ENCODE measurements at regions of chr12 and their contacts with region 1.

Region 1: GRCh38 chr12:39103552-39104165 is 198.3 kb upstream of the CPNE8 start:
- DNase-seq: no peak
- ATAC-seq: peak; percentile 94 to 95
- H3K4me3 ChIP-seq: no peak overlapping the region
- H3K27ac ChIP-seq: no peak overlapping the region
- H3K4me1 ChIP-seq: no peaks in the 10 kb centered on the region
- H3K27me3 ChIP-seq: no peaks in the 10 kb centered on the region
- CTCF ChIP-seq: peak; percentile 79

Region 2: DNA sequence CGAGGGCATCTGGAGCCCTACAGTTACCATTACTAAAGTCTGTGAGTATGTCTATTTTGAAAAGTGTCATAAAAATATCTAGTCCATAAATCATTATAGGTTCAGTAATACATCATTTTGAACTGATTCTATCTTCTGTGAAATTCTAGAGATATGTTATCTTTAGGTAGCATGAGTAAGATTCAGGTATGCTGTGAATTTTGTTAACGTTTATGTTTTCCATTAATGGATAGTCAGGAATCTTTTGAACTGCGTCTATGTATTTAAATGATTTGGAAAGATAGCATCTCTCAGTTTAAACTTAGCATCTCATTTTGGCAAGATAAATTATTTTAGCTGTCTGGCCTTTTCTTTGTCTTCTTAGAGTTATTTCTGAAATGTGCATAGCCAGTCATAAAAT is 778.8 kb before region 1 on chr12:
- intact Hi-C with region 1: loop called (anchors 10 kb)
- DNase-seq: no peak
- ATAC-seq: no peak
- H3K4me3 ChIP-seq: no peak overlapping the region
- H3K27ac ChIP-seq: no peak overlapping the region
- H3K4me1 ChIP-seq: no peaks in the 10 kb centered on the region
- H3K27me3 ChIP-seq: no peaks in the 10 kb centered on the region
- CTCF ChIP-seq: no peak

Region 3: GRCh38 chr12:38921025-38921677 is 182.5 kb before region 1 on chr12:
- intact Hi-C with region 1: loop called (anchors 10 kb)
- DNase-seq: no peak
- ATAC-seq: peak; percentile 74 to 75
- H3K4me3 ChIP-seq: no peak overlapping the region
- H3K27ac ChIP-seq: no peak overlapping the region
- H3K4me1 ChIP-seq: no peaks in the 10 kb centered on the region
- H3K27me3 ChIP-seq: no peaks in the 10 kb centered on the region
- CTCF ChIP-seq: peak; percentile 54